Activated CD4-positive, alpha-beta T cell treated with anti-CD3 and anti-CD28 coated beads for 36 hours (primary cell): ENCODE measurements at regions of chr10 and their contacts with region 1.

Region 1: DNA sequence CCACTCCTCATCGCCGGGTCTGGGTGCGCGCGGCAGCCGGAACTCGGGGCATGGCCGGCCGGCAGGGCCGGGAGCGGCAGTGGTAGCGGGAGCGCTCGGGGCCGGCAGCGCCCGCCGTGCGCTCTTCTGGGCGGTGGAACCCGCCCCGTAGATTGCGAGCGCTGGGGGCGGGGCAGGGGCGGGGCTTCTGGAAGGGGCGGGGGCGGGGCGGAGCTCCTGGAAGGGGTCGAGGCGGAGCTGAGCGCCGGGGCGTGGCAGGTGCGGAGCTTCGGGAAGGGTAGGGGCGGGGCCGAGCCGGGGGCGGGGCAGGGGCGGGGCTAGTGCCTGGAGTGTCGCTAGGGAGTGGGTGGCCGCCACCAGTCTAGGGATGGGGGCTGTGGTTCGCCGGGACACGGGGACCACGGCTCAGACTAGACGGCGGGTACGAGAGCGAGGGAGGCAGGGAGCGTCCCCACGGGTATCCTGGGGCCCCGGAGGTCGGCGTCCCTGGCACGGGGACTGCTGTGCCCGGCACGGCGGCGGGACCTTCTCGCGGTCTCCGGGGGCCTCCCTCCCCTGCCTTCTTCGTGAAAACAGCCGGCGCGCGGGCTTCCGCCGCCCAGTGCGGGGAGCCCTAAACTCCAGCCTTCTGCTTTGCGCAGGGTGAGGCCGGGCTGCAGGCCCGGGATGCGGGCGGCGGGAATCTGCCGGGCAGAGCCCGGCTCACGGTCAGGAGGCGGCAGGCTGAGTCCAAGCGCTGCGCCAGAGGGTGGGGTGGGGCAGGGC is at the start of gene STK32C:
- DNase-seq: peak; percentile 96
- ATAC-seq: peak; percentile 86
- H3K4me3 Mint-ChIP-seq: peak within 1 kb of the TSS; percentile 84
- H3K27ac Mint-ChIP-seq: no peak within 1 kb of the TSS
- H3K4me1 Mint-ChIP-seq: peaks cover 8% of the 10 kb centered on the region
- H3K27me3 Mint-ChIP-seq: peaks cover 2% of the 10 kb centered on the region
- total RNA-seq, gene STK32C: 15.8 to 19.9 TPM

Region 2: GRCh38 chr10:132158122-132158741 is 149.8 kb before region 1 on chr10:
- CTCF ChIA-PET with region 1: no interaction called
- POLR2A ChIA-PET with region 1: no interaction called
- intact Hi-C with region 1: loop called in 1 of 2 experiments (anchors 1 kb)
- DNase-seq: peak; percentile 57
- ATAC-seq: peak; percentile 56
- H3K4me3 Mint-ChIP-seq: no peak overlapping the region
- H3K27ac Mint-ChIP-seq: peak overlapping the region; percentile 82
- H3K4me1 Mint-ChIP-seq: peaks cover 22% of the 10 kb centered on the region
- H3K27me3 Mint-ChIP-seq: no peaks in the 10 kb centered on the region

Region 3: DNA sequence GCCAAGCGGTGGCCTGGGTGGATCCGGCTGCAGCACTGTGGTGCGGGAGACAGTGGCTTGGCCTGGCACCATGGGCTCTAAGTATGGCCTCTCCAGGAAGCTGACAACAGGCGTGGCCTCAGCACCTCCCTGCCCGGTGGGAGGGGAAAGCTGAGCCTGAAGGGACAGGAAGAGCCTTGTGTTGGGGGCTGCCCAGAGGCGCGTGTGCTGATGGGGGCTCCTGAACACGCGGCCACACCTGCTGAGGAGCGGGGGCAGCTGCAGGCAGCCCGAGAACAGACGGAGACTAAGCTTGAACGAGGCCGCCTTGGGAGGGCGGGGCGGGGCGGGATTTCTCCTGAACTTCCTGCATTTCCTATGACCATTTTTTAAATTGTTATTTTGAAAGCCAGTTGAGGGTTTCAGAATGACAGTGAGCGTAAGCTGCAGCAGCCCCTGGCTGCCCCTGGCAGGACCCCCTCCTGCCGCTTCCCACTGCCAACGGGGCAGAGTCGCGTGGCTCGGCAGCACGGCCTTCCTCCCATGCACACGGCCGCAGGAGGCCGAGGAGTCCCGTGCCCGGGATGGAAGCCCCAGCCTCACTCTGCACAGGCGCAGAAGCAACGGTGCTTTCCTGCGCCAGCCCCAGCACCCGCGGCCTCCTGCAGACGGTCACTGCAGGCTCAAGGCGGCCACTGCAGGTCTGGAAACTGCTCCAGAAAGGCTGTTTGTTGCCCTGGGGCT is 78.0 kb before region 1 on chr10:
- CTCF ChIA-PET with region 1: no interaction called
- POLR2A ChIA-PET with region 1: no interaction called
- intact Hi-C with region 1: loop called in 1 of 2 experiments (anchors 1 kb)
- DNase-seq: peak; percentile 65
- ATAC-seq: peak; percentile 59
- H3K4me3 Mint-ChIP-seq: peak overlapping the region; percentile 64
- H3K27ac Mint-ChIP-seq: peak overlapping the region; percentile 93
- H3K4me1 Mint-ChIP-seq: peaks cover 34% of the 10 kb centered on the region
- H3K27me3 Mint-ChIP-seq: no peaks in the 10 kb centered on the region

Region 4: GRCh38 chr10:132407814-132408278 is 99.8 kb after region 1 on chr10:
- CTCF ChIA-PET with region 1: no interaction called
- POLR2A ChIA-PET with region 1: no interaction called
- intact Hi-C with region 1: no loop called
- DNase-seq: no peak
- ATAC-seq: peak; percentile 17
- H3K4me3 Mint-ChIP-seq: no peak overlapping the region
- H3K27ac Mint-ChIP-seq: no peak overlapping the region
- H3K4me1 Mint-ChIP-seq: peaks cover 6% of the 10 kb centered on the region
- H3K27me3 Mint-ChIP-seq: no peaks in the 10 kb centered on the region

Region 5: DNA sequence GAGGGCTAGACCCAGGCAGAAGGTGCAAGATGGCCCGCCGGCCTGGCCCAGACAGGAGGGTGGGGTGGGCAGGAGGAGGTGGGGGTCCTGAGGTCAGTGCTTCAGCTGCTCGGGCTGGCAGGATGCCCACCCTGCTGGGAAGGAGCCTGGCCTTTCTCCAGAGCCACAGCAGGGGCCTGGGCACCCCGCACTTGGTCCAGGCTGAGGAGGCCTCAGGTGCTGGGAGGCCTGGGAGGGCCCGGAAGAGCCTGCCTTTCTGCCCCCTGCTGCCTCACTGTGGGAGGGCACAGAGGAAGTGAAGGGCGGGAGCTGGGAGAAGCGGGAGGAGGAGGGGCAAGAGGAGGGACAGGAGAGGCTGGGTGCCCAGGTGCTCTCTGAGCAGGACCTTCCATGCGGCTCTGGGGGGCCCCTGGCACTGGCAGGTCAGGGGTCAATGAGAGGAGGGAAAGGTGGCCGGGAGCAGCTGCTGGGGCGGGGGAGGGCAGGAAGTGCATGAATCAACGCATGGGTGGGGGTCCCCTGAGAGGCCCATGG is 138.7 kb after region 1 on chr10:
- CTCF ChIA-PET with region 1: no interaction called
- POLR2A ChIA-PET with region 1: no interaction called
- intact Hi-C with region 1: loop called (anchors 1 to 2 kb)
- DNase-seq: peak; percentile 90
- ATAC-seq: peak; percentile 76
- H3K4me3 Mint-ChIP-seq: peak overlapping the region; percentile 78
- H3K27ac Mint-ChIP-seq: peak overlapping the region; percentile 99
- H3K4me1 Mint-ChIP-seq: peaks cover 35% of the 10 kb centered on the region
- H3K27me3 Mint-ChIP-seq: no peaks in the 10 kb centered on the region

Region 6: DNA sequence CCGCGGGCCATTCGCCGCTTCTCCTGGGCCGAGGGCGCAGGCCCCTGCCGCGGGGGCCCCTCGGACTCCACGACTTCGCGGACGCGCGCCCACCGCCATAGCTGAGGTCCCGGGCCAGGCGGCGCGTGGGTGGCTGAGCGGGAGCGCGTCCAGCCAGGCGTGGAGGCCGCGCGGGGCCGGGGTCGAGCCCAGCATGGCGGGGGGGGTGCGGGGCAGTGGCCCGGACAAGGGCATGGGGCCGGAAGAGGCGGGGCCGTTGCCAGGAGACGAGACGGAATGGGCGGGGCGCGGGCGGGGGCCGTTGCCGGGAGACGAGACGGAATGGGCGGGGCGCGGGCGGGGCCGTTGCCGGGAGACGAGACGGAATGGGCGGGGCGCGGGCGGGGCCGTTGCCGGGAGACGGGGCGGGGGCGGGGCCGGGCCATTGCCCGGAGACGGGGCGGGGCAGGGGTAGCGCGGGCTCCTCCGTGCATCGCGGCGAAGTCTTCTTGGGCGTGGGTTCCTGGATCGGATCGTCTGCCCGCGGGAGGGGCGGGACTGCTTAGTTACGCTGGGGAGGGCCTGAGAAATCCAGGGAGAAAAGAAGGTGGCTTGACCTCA is 953.8 kb after region 1 on chr10:
- CTCF ChIA-PET with region 1: no interaction called
- POLR2A ChIA-PET with region 1: no interaction called
- intact Hi-C with region 1: loop called in 1 of 2 experiments (anchors 5 kb)
- DNase-seq: peak; percentile 93
- ATAC-seq: peak; percentile 30
- H3K4me3 Mint-ChIP-seq: peak overlapping the region; percentile 74
- H3K27ac Mint-ChIP-seq: no peak overlapping the region
- H3K4me1 Mint-ChIP-seq: peaks cover 76% of the 10 kb centered on the region
- H3K27me3 Mint-ChIP-seq: no peaks in the 10 kb centered on the region